ENCODE measurements at regions of chr7 and their contacts with region 1.

Region 1: DNA sequence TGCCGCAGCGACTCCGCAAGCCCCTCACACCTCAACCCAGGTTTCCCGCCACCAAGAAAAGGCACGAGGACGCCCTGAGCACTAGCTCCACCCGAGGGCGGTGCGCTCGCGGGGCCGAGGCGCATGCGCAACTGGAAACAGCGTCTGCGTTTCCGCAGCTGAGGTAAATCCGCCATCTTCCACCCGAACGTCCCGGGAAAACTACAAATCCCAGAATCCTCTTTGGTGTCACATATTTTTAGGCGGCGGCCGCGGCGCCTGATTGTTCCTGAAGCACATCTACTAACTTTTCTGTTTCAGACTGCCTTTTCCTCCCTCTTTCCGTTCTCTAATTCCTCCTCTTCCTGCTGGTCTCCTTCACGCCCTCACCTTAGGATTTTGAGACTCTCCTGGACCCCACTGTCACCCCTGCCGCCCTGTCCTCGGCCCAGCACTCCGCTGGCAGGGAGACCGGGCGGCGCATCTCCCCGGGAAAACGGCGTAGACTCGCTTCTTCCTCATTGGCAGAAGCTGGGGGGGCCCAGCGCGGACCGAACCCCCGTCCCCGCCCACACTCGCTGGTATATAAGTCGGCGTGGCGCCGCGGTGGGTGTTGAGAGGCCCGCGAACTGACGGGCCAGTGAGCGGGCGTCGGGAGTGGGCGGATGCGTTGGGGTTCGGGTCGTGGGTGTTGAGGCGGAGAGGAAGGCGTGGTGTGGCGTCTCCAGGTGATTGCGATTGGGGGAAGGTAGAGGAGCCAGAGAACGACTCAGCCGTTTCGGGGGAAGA is at the start of gene ZCWPW1:
- DNase-seq: peak; percentile 90 to 96
- H3K4me3 ChIP-seq: peak within 1 kb of the TSS; percentile 73 to 85 (median 80)
- H3K27ac ChIP-seq: peak within 1 kb of the TSS; percentile 96
- H3K4me1 ChIP-seq: peaks cover 0 to 16% (median 8%) of the 10 kb centered on the region in 4 experiments; a peak in 6 of 7 replicates
- H3K27me3 ChIP-seq: peaks cover 0 to 6% (median 6%) of the 10 kb centered on the region in 4 experiments; a peak in 4 of 7 replicates
- CTCF ChIP-seq: 0 out of 4 replicates have a peak, but pooled peaks of 1 of the 3 experiments have one; percentile 6
- EP300 ChIP-seq: no peak
- POLR2A ChIP-seq: peak in 1 of 2 experiments; percentile 86; a peak in 2 of 3 replicates
- RAD21 ChIP-seq: no peak
- total RNA-seq, gene ZCWPW1: 1.4 and 2.7 TPM in 2 replicates

Region 2: DNA sequence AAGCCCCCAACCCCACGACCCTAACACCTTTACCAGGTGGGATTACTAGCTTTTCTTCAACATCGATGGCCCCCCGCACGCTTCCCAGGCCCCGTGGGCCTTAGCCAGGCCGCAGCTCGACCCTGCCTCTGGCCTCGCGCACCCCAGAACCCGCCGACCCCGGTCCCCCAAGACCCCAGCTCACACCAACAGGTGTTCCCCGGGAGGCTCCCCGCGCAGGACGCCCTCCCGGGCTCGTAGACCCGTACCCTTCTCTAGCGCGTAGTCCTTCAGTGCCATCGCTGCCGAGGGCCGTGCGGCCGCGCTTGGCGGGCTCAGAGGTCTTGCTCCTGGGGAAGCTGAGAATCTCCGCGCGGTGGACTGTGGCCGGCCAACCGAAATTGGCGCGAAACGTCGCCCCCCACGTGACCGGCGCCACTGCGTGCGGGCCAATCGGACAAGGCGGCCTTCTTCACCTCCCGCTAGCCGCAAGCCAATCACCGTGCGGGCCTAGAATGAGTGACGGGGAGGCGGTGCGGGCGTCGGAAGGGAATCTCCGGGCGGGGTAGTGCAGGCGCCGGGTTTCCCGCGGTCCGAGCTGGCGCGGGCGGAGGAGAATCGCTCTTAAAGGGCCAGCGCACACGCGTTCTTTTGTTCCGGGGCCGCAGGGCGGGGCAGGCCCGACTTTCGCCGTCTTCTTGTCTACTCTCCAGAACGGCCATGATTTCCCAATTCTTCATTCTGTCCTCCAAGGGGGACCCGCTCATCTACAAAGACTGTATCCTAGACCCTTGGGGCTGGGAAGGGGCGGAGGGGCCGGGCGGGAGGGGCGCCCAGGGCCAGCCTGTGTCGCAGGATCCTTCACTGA is 327.1 kb before region 1 on chr7 and contains the starts of genes AP4M1 and MCM7:
- CTCF ChIA-PET with region 1: no interaction called
- POLR2A ChIA-PET with region 1: interaction called, 22 read pairs
- DNase-seq: peak; percentile 94 to 98
- H3K4me3 ChIP-seq: peak within 1 kb of the TSS; percentile 76 to 97 (median 84)
- H3K27ac ChIP-seq: peak within 1 kb of the TSS; percentile 98
- H3K4me1 ChIP-seq: peaks cover 0 to 8% (median 3%) of the 10 kb centered on the region in 4 experiments; a peak in 3 of 7 replicates
- H3K27me3 ChIP-seq: no peaks in the 10 kb centered on the region
- CTCF ChIP-seq: no peak; a peak in 1 of 4 replicates
- EP300 ChIP-seq: no peak
- POLR2A ChIP-seq: peak in 1 of 2 experiments; percentile 77; a peak in 2 of 3 replicates
- RAD21 ChIP-seq: no peak
- total RNA-seq, gene AP4M1: 15.2 and 15.8 TPM in 2 replicates
- total RNA-seq, gene MCM7: 339 and 344 TPM in 2 replicates

Region 3: GRCh38 chr7:100380196-100380595 is 48.2 kb before region 1 on chr7:
- CTCF ChIA-PET with region 1: no interaction called
- POLR2A ChIA-PET with region 1: interaction called, 26 read pairs
- DNase-seq: no peak
- H3K4me3 ChIP-seq: no peak overlapping the region
- H3K27ac ChIP-seq: no peak overlapping the region
- H3K4me1 ChIP-seq: no peaks in the 10 kb centered on the region
- H3K27me3 ChIP-seq: no peaks in the 10 kb centered on the region; a peak in 2 of 7 replicates
- CTCF ChIP-seq: no peak
- EP300 ChIP-seq: no peak
- POLR2A ChIP-seq: no peak
- RAD21 ChIP-seq: no peak

Region 4: GRCh38 chr7:100407285-100408180 is 20.9 kb before region 1 on chr7:
- CTCF ChIA-PET with region 1: interaction called, 17 read pairs
- POLR2A ChIA-PET with region 1: interaction called, 14 read pairs
- DNase-seq: peak in 1 of 2 experiments; percentile 51
- H3K4me3 ChIP-seq: no peak overlapping the region
- H3K27ac ChIP-seq: no peak overlapping the region
- H3K4me1 ChIP-seq: no peaks in the 10 kb centered on the region
- H3K27me3 ChIP-seq: no peaks in the 10 kb centered on the region; a peak in 1 of 7 replicates
- CTCF ChIP-seq: peak in 2 of 3 experiments; percentile 66 to 76; a peak in 3 of 4 replicates
- EP300 ChIP-seq: no peak
- POLR2A ChIP-seq: no peak
- RAD21 ChIP-seq: peak; percentile 74 to 78

Region 5: GRCh38 chr7:100456558-100456957 is 28.2 kb after region 1 on chr7:
- CTCF ChIA-PET with region 1: interaction called, 8 read pairs
- POLR2A ChIA-PET with region 1: interaction called, 81 read pairs
- DNase-seq: no peak
- H3K4me3 ChIP-seq: no peak overlapping the region
- H3K27ac ChIP-seq: no peak overlapping the region
- H3K4me1 ChIP-seq: peaks cover 0 to 8% (median 6%) of the 10 kb centered on the region in 4 experiments; a peak in 6 of 7 replicates
- H3K27me3 ChIP-seq: no peaks in the 10 kb centered on the region
- CTCF ChIP-seq: peak; percentile 32 to 41 (median 34); a peak in 3 of 4 replicates
- EP300 ChIP-seq: no peak
- POLR2A ChIP-seq: no peak
- RAD21 ChIP-seq: peak; percentile 31 to 43; a peak in 2 of 4 replicates

Region 6: DNA sequence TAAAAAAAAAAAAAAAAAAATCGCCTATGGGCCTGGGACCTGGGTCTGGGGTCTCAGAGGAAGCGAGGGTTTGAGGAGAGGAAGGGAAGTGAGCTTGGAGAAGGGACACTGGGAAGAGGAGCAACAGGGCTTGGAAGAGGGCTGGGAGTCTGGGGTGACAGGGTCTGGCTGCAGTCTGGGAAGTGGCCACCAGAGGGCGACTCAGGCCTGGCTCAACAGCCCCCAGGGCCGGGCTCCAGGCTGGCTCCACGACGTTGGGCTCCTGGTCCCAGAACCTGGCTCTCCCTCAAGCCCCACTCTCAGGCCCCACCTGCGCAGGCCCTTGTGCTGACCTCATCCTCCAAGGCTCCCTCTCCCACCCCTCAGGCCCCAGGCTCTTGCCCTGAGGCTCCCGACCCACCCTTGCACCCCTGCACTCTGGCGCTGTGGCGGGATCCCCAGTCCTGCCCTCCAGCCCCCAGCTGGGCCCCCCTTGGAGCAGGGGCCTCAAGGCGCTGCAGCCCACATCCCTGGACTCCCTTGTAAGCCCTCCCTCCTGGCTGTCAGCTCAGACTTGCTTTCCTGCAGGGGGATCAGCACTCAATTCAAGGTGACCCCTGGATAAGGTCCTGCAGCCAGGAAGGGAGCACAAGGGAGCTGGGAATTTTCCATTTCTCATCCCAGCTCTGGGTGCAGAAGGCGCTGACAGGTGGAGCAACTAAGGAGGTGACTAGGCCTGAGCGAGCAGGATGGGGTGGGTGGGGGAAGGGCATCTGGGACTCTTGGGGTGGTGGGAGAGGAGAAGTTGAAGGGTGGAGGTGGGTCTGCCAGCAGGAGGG is 41.1 kb after region 1 on chr7:
- CTCF ChIA-PET with region 1: interaction called, 4 read pairs
- POLR2A ChIA-PET with region 1: interaction called, 25 read pairs
- DNase-seq: peak in 1 of 2 experiments; percentile 99
- H3K4me3 ChIP-seq: no peak overlapping the region
- H3K27ac ChIP-seq: no peak overlapping the region
- H3K4me1 ChIP-seq: peaks cover 0 to 11% (median 4%) of the 10 kb centered on the region in 4 experiments; a peak in 6 of 7 replicates
- H3K27me3 ChIP-seq: no peaks in the 10 kb centered on the region
- CTCF ChIP-seq: peak; percentile 91 to 98 (median 97)
- EP300 ChIP-seq: no peak
- POLR2A ChIP-seq: no peak
- RAD21 ChIP-seq: peak; percentile 95 to 96

Region 7: DNA sequence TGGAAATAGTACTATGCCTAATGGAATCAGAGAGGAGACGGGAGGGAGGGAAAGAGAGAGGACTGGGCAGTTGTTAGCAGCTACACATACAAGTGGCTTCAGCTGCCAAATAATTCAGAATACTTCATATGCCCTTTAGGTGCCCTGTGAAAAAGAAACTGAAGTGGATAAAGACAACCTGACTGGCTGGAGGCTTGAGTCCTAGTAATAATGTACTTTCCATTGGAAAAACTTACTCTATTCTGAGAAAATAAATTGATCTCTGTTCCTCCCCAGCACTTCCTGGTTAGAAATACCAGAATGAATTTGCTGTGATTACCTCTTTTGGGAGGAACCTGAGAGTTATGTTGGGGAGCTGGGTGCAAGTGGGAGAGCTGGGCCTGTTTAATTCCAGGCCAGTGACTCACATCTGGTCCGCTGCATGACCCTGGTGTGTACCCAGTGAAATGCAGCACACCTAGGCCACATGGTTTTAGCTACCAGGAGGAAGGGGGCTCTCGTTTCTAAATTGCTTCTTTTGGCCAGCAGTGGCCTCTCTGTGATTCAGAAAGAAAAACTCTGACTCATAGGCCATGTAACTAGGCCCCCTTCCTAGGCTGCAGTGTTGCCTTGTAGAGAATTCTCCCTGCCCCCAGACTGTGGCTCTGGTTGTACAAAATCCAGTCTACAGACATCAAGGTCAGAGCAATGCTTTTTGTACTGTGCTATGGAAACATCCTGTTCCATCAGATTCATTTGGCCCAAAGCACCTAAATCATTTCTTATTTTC is 117.2 kb after region 1 on chr7:
- CTCF ChIA-PET with region 1: no interaction called
- POLR2A ChIA-PET with region 1: interaction called, 10 read pairs
- DNase-seq: no peak
- H3K4me3 ChIP-seq: no peak overlapping the region; a peak in 1 of 8 replicates
- H3K27ac ChIP-seq: peak overlapping the region; percentile 0; the same call in 1 of the 2 replicates
- H3K4me1 ChIP-seq: peaks cover 11 to 44% (median 26%) of the 10 kb centered on the region in 4 experiments; a peak in 6 of 7 replicates
- H3K27me3 ChIP-seq: peaks cover 0 to under 1% (median under 1%) of the 10 kb centered on the region in 4 experiments; a peak in 1 of 7 replicates
- CTCF ChIP-seq: peak in 1 of 3 experiments; percentile 12; a peak in 2 of 4 replicates
- EP300 ChIP-seq: no peak
- POLR2A ChIP-seq: peak in 1 of 2 experiments; percentile 33; a peak in 1 of 3 replicates
- RAD21 ChIP-seq: no peak